ENCODE measurements at regions of chr12 and their contacts with region 1.

Region 1: DNA sequence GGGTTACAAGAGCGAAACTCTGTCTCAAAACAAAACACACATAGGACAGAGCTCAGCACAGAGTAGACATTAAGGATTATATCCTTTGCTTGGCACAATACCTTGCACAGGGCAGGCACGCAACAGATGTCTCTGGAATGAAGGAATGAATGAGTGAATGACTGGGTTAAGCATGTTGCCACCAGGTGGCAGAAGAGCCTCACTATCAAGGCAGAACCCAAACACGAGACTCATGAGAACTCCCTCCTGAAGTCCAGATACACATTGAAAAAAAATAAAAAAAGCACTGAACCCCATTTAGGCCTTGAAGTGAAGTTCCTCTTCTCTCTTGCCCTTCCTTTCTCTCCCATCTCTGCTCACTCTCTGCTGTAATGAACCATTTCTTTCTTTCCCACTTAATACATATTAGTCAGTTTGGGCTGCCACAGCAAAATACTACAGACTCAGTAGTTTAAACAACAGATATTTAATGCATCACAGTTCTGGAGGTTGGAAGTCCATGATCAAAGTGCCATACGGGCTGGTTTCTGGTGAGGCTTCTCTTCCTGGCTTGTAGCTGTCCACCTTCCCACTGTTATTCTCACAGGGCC is 26.6 kb upstream of the LTA4H start:
- DNase-seq: peak; percentile 4
- H3K4me3 ChIP-seq: no peak overlapping the region
- H3K27ac ChIP-seq: peak overlapping the region in 3 of 4 donors; percentile 11 to 33 (median 15)
- H3K4me1 ChIP-seq: peaks cover 0 to 40% (median 4%) of the 10 kb centered on the region in 3 donors
- H3K27me3 ChIP-seq: no peaks in the 10 kb centered on the region
- CTCF ChIP-seq: peak; percentile 86 to 91 (median 89)
- POLR2A ChIP-seq: no peak

Region 2: GRCh38 chr12:96211988-96212387 is 150.0 kb after region 1 on chr12:
- intact Hi-C with region 1: loop called (anchors 5 kb)
- DNase-seq: no peak
- H3K4me3 ChIP-seq: peak overlapping the region in 1 of 4 donors; percentile 13
- H3K27ac ChIP-seq: peak overlapping the region in 3 of 4 donors; percentile 30 to 73 (median 62)
- H3K4me1 ChIP-seq: peaks cover 28 to 100% (median 79%) of the 10 kb centered on the region in 3 donors
- H3K27me3 ChIP-seq: no peaks in the 10 kb centered on the region
- CTCF ChIP-seq: no peak
- POLR2A ChIP-seq: no peak

Region 3: DNA sequence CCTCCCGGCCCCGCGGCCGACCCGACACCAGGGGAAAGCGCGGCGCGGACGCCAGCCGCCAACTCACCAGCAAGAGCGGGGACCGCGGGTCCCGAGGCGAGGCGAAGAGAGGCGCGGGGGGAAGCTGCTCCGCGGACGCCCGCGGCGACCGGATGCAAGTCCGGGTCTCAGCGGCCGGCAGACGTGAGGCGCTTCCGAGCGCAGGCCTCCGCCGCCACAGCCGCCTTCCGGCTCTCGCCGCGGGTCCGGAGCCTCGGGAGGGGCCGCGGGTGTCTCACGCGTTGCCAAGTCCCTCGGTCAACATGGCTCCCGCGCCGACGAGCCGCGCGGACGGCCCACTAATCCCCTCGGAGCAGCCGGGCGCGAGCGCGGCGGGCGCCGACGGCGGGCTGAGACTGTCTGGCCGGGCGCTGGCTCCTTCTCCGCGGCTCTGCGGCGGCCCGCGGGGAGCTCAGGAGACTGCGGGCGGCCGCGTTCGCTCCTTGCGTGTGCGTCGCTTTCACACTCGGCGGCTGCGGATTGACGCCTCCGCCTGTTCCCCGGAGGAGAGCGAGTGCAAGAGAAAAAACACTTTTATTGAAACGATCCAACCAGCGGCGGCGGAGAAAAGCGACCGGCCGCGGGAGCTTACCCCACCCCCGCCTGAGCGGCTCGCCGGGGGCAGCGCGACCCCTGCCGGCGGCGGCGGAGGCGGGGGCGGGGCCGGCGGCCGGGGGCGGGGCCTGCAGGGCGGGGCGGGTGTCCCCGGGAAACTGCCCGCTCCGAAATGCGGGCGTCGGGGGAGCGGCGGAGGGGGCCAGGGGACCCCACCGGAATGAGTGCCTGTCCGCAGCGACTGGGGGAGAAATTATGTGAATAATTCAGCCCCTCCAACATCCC is 338.2 kb after region 1 on chr12 and contains the start of gene CDK17:
- intact Hi-C with region 1: loop called (anchors 5 kb)
- DNase-seq: peak; percentile 13
- H3K4me3 ChIP-seq: peak within 1 kb of the TSS; percentile 83 to 100 (median 92)
- H3K27ac ChIP-seq: peak within 1 kb of the TSS; percentile 96 to 100 (median 98)
- H3K4me1 ChIP-seq: peaks cover 0 to 52% (median 18%) of the 10 kb centered on the region in 3 donors
- H3K27me3 ChIP-seq: no peaks in the 10 kb centered on the region
- CTCF ChIP-seq: peak in 4 of 6 experiments; percentile 33 to 57 (median 44)
- POLR2A ChIP-seq: peak in 2 of 4 donors; percentile 81 to 84
- total RNA-seq, gene CDK17: 15.4 to 37.4 (median 19.9) TPM

Region 4: GRCh38 chr12:96516472-96517430 is 454.8 kb after region 1 on chr12:
- intact Hi-C with region 1: loop called (anchors 5 kb)
- DNase-seq: peak; percentile 15
- H3K4me3 ChIP-seq: no peak overlapping the region
- H3K27ac ChIP-seq: peak overlapping the region in 1 of 4 donors; percentile 22
- H3K4me1 ChIP-seq: peaks cover 3 to 4% (median 4%) of the 10 kb centered on the region in 3 donors
- H3K27me3 ChIP-seq: no peaks in the 10 kb centered on the region
- CTCF ChIP-seq: peak; percentile 54 to 81 (median 72)
- POLR2A ChIP-seq: no peak